ENCODE measurements at regions of chr14 and their contacts with region 1.

Region 1: DNA sequence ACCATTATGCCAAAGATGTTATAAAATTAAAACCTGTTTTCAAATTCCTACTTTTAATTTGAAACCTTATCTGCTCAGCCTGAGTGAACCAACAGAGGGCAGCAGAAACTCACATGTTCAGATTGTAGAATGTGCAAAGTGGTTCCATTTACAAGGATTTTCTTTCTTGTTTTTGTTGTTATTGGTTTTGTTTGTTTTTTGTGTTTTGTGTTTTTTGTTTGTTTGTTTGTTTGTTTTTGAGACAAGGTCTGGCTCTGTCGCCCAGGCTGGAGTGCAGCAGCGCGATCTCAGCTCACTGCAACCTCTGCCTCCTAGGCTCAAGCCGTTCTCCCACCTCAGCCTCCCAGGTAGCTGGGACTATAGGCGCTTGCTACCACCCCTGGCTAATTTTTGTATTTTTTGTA is 22.8 kb upstream of the GARIN2 start:
- DNase-seq: peak in 34 of 42 donors; percentile 4 to 83 (median 52)

Region 2: DNA sequence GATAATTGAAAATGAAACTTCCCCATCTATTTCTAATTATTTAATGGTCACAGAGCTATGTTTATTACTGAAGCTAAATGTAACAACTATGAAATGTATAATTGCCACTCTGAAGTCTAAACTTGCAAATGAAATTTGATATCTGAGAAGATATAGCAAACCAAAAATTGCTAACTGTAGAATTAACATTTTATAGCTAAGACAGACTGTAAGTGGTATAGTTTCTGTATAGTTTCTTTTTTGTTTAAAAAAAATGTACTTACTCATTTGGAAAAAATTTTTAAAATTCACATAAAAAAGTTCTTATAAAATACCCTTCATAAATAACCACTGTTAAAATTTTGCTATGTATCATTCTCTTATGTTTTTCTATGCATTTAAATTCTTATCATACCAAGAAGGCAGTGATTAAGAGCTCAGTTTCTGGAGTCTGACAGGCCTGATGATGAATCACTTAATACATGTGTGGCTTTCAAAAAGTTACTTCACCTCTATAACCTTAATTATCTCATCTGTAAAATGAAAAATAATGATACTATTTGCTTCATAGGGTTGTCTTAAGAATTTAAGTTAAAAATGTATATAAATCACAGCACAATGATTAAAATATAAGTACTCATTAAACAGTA is 191.9 kb before region 1 on chr14:
- intact Hi-C with region 1: no loop called
- DNase-seq: no peak

Region 3: DNA sequence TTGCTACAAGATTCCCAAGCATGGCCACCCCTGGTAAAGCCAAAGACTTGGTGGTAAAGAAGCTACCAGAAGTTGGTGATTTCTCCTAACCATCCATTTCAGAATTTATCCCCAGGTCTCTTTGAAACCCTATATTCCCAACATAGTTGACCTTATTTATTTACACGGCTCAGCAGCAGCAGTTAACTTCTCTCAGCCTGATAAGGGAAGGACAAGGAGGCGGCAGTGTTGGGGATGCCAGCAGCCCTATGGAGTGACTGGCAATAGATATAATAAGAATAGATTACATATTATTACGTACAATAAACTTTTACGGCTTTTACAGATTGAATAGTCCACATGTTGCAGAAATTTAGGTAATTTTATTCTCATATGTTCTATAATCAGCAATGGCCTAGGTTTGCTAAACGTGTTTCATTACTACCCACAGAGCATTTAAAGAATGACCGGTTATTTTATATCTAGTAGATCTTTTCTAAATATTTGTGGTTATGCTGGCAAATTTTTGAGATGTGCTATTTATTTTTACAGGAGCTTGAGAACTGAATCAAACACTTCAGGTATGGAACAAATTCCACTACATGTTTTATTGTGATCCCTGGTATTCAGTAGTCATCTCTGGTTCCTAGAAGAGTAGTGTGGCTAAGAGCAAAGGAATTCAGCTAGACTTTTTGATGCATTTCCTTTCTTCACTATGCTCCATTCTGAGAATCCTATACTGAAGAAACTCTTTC is 55.0 kb after region 1 on chr14:
- intact Hi-C with region 1: no loop called
- DNase-seq: no peak

Region 4: DNA sequence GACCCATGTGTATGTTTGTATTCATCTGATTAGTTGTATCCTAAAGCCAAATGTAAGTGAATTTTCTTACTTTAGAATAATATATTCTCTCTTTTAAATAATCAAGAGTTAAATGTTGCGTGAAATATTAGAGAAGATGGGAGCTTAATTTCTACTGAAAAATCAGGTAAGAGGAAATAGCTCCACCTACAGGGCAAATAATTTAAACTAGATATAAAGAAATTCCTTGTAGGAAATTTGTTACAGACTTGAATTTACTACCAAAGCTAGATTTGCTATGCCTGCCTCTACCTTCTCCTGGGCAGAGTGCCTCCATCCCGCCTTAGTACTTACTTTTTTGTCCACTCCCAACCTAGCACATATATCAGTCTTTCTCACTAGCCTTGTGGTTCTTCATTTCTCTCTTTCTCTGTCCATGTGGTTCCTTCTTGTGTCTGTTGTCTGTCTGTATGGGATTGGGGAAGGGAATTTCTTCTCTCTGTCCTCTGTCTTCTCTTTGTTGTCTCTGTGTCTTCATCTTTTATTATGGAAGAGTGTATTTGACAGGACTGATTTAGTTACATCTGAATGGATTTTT is 119.5 kb after region 1 on chr14:
- intact Hi-C with region 1: loop called (anchors 5 kb)
- DNase-seq: no peak

Region 5: GRCh38 chr14:67359775-67360648 is 193.6 kb after region 1 on chr14 and contains the starts of genes ATP6V1D and EIF2S1:
- intact Hi-C with region 1: loop called (anchors 10 kb)
- DNase-seq: peak; percentile 97 to 100 (median 99)